A549 (cell line): ENCODE measurements at regions of chr16 and their contacts with region 1.

Region 1: DNA sequence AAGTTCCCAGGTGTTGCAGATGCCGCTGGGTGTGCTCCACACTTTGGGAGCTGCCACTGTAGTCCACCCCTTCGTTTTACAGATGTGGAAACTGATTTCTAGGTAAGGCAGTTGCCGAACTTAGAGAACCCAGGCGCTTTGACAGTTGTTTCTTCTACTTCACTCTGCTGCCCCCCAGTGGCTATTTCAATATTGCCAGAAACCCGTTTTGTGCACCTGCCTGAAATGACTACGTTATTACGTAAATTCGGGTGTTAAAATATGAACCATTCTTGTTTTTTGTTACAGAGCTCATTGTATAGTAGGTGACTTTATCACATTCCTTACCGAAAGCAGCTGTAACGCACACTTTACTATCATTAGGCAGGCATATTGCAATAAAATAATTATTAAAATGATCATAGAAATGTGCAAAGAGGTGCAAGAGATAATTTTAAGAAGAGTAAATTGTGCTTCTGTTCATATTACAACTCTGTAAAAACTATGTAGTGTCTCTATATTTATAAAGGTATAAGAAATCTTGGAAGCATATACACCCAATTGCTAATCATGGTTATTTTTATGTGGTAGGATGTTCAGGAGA is 44.9 kb downstream of the OTOA start:
- DNase-seq: peak; percentile 66 to 73
- ATAC-seq: peak; percentile 62 to 79; a peak in 5 of 6 replicates
- H3K4me3 ChIP-seq: no peak overlapping the region
- H3K27ac ChIP-seq: no peak overlapping the region
- H3K4me1 ChIP-seq: no peaks in the 10 kb centered on the region
- CTCF ChIP-seq: peak; percentile 77
- EP300 ChIP-seq: no peak
- POLR2A ChIP-seq: no peak
- RAD21 ChIP-seq: peak; percentile 74 to 77

Region 2: GRCh38 chr16:21593530-21594289 is 114.9 kb before region 1 on chr16:
- CTCF ChIA-PET with region 1: interaction called, 10 read pairs
- POLR2A ChIA-PET with region 1: no interaction called
- DNase-seq: no peak
- ATAC-seq: no peak
- H3K4me3 ChIP-seq: no peak overlapping the region
- H3K27ac ChIP-seq: no peak overlapping the region
- H3K4me1 ChIP-seq: peaks cover 5% of the 10 kb centered on the region
- CTCF ChIP-seq: no peak
- EP300 ChIP-seq: no peak
- POLR2A ChIP-seq: no peak
- RAD21 ChIP-seq: no peak

Region 3: DNA sequence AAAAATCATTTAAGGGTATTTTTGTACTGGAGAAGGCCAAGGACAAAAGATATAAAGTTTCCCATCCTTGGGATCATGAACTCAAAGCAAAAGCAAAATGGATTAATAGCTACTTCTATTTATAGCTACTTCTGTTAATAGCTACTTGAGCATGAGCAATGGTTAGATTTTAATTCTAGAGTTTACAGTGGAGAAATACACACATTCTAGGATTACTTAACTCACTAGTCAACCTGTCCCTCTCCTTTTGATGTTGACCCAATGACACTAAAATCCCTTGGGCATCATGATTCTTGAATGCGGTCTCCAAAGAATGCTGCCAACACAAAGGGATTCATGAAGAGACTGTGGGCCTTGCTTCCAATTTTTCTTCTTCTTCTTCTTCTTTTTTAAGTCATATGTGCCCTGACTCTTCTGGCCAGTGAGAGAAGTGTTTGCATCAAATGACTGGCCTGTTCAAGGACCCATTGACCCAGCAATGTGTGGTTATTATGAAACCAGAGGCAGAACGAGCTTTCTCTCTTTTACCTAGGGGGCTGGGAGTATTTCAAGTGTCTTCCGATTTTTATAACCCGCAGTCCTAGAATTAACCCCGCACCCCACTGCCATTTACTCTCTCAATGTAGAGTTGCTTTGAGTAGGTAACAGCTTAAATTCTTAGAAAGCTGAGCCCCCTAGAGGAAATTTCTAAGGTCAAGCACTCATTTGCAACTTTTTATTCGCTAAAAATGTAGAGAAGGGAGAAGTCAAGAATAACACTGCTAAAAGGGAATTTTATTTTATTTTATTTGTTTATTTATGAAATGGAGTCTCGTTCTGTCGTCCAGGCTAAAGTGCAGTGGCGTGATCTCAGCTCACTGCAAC is 10.2 kb before region 1 on chr16:
- CTCF ChIA-PET with region 1: interaction called, 24 read pairs
- POLR2A ChIA-PET with region 1: no interaction called
- DNase-seq: no peak
- ATAC-seq: no peak
- H3K4me3 ChIP-seq: no peak overlapping the region
- H3K27ac ChIP-seq: no peak overlapping the region
- H3K4me1 ChIP-seq: no peaks in the 10 kb centered on the region
- CTCF ChIP-seq: no peak
- EP300 ChIP-seq: no peak
- POLR2A ChIP-seq: no peak
- RAD21 ChIP-seq: no peak

Region 4: GRCh38 chr16:21719283-21719682 is 10.7 kb after region 1 on chr16:
- CTCF ChIA-PET with region 1: interaction called, 22 read pairs
- POLR2A ChIA-PET with region 1: no interaction called
- DNase-seq: no peak
- ATAC-seq: no peak
- H3K4me3 ChIP-seq: no peak overlapping the region
- H3K27ac ChIP-seq: no peak overlapping the region
- H3K4me1 ChIP-seq: no peaks in the 10 kb centered on the region
- CTCF ChIP-seq: no peak
- EP300 ChIP-seq: no peak
- POLR2A ChIP-seq: no peak
- RAD21 ChIP-seq: no peak